Esophagus squamous epithelium (tissue), 5 donors: ENCODE measurements at regions of chr10 and their contacts with region 1.

Region 1: DNA sequence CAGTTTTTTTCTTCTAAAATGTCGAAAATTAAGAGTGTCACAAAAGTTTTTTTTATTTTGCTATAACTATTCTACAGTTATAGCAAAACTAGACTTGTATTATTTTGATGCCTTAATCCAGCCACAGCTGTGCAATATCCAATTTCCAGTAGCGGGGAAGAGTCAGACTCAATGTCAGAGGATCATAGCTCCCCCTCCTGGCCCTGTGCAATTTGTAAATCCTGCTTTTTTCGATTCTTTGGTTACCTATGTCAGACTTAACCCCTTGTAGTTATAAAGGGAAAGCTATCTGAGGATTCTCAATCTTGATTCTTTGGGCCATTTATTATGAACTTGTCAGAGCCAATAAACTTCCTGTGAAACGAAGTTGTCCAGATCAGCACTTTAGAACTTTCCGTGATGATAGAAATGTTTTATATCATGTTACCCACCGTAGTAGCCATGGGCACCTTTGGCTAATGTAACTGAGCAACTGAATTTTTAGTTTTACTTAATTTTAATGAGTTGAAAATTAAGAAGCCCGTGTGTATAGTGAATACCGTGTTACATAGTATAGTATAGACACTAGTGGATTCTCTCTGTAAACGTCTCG is 87.7 kb upstream of the PRKCQ start:
- DNase-seq: no peak
- H3K4me3 ChIP-seq: no peak overlapping the region
- H3K27ac ChIP-seq: no peak overlapping the region
- H3K4me1 ChIP-seq: no peaks in the 10 kb centered on the region
- H3K27me3 ChIP-seq: peaks cover 0 to 16% (median 1%) of the 10 kb centered on the region in 4 donors
- CTCF ChIP-seq: peak; percentile 13 to 64 (median 32)
- POLR2A ChIP-seq: no peak

Region 2: GRCh38 chr10:6431861-6432260 is 235.9 kb before region 1 on chr10:
- intact Hi-C with region 1: loop called (anchors 10 kb)
- DNase-seq: no peak
- H3K4me3 ChIP-seq: no peak overlapping the region
- H3K27ac ChIP-seq: no peak overlapping the region
- H3K4me1 ChIP-seq: no peaks in the 10 kb centered on the region
- H3K27me3 ChIP-seq: no peaks in the 10 kb centered on the region
- CTCF ChIP-seq: no peak
- POLR2A ChIP-seq: no peak

Region 3: GRCh38 chr10:6542999-6543430 is 124.8 kb before region 1 on chr10:
- intact Hi-C with region 1: no loop called
- DNase-seq: no peak
- H3K4me3 ChIP-seq: peak overlapping the region in 1 of 4 donors; percentile 21
- H3K27ac ChIP-seq: peak overlapping the region in 1 of 4 donors; percentile 42
- H3K4me1 ChIP-seq: no peaks in the 10 kb centered on the region
- H3K27me3 ChIP-seq: no peaks in the 10 kb centered on the region
- CTCF ChIP-seq: no peak
- POLR2A ChIP-seq: peak in 1 of 4 donors; percentile 8

Region 4: GRCh38 chr10:6580279-6581029 is 87.3 kb before region 1 on chr10:
- intact Hi-C with region 1: loop called (anchors 5 kb)
- DNase-seq: no peak
- H3K4me3 ChIP-seq: peak overlapping the region; percentile 50 to 90 (median 61)
- H3K27ac ChIP-seq: peak overlapping the region; percentile 55 to 83 (median 69)
- H3K4me1 ChIP-seq: peaks cover 0 to 19% (median 0%) of the 10 kb centered on the region in 3 donors
- H3K27me3 ChIP-seq: peaks cover 0 to 47% (median 0%) of the 10 kb centered on the region in 4 donors
- CTCF ChIP-seq: peak; percentile 20 to 74 (median 62)
- POLR2A ChIP-seq: peak in 1 of 4 donors; percentile 34